PC-9 (cell line): ENCODE measurements at regions of chr1 and their contacts with region 1.

Region 1: DNA sequence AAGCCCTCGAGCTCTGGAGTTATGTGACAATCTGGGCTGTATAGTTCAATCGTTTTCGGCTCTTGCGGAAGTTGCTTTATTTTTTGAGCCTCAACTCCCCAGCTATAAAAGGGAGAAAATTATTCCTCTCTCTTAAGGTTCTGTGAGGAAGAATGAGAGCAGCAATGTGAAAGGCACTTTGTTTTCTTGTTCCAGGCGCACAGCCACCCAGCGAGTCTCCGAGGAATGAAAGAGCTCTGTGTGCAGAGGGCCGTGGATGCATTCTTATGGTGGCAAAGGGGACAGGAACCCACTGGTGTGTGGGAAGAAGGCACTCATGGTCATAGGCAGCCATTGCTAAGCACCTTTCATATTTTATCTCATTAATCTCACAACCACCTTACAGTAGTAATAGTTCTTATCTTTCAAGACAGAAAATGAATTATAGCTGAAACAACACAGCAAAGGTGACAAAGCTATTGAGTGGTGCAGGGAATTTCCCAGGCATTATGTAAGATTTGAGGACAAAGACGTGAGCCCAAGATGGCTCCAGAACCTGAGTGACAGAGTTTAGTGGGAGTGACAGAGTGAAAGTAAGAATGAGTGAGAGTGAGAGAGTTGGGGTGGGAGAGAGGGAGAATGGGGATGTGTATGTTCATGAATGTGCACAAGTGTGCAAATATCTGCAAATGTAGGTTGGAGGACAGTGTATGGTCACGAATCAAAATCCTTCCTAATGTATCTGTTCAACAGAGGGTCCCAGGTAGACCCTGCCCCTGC is 9.4 kb downstream of the CYP2J2 start:
- DNase-seq: no peak
- H3K4me3 ChIP-seq: no peak overlapping the region
- H3K27ac ChIP-seq: no peak overlapping the region
- H3K4me1 ChIP-seq: peaks cover 11% of the 10 kb centered on the region; the same call in 1 of the 2 replicates
- H3K27me3 ChIP-seq: no peaks in the 10 kb centered on the region
- CTCF ChIP-seq: no peak

Region 2: GRCh38 chr1:59879574-59879973 is 37.6 kb before region 1 on chr1:
- CTCF ChIA-PET with region 1: no interaction called
- POLR2A ChIA-PET with region 1: no interaction called
- intact Hi-C with region 1: loop called (anchors 1 kb)
- DNase-seq: peak; percentile 50 to 70
- H3K4me3 ChIP-seq: no peak overlapping the region
- H3K27ac ChIP-seq: no peak overlapping the region
- H3K4me1 ChIP-seq: no peaks in the 10 kb centered on the region
- H3K27me3 ChIP-seq: no peaks in the 10 kb centered on the region
- CTCF ChIP-seq: peak; percentile 82